ENCODE measurements at regions of chr1 and their contacts with region 1.

Region 1: GRCh38 chr1:229258031-229258756 is 12.7 kb upstream of the RAB4A start:
- DNase-seq: no peak
- ATAC-seq: peak; percentile 89
- H3K4me3 ChIP-seq: no peak overlapping the region
- H3K27ac ChIP-seq: no peak overlapping the region
- H3K4me1 ChIP-seq: 0 out of 2 replicates have a peak, but pooled peaks cover 6% of the 10 kb centered on the region
- H3K27me3 ChIP-seq: no peaks in the 10 kb centered on the region
- CTCF ChIP-seq: peak; percentile 81

Region 2: GRCh38 chr1:228702433-228702832 is 555.8 kb before region 1 on chr1:
- CTCF ChIA-PET with region 1: no interaction called
- POLR2A ChIA-PET with region 1: no interaction called
- in situ Hi-C with region 1: no loop called
- intact Hi-C with region 1: no loop called
- DNase-seq: no peak
- ATAC-seq: no peak
- H3K4me3 ChIP-seq: no peak overlapping the region
- H3K27ac ChIP-seq: no peak overlapping the region
- H3K4me1 ChIP-seq: no peaks in the 10 kb centered on the region
- H3K27me3 ChIP-seq: no peaks in the 10 kb centered on the region
- CTCF ChIP-seq: no peak

Region 3: GRCh38 chr1:228734881-228735801 is 523.1 kb before region 1 on chr1 and contains the start of gene RHOU:
- CTCF ChIA-PET with region 1: no interaction called
- POLR2A ChIA-PET with region 1: interaction called, 11 read pairs
- in situ Hi-C with region 1: no loop called
- intact Hi-C with region 1: no loop called
- DNase-seq: no peak
- ATAC-seq: peak; percentile 95
- H3K4me3 ChIP-seq: peak within 1 kb of the TSS; percentile 62 to 63
- H3K27ac ChIP-seq: peak within 1 kb of the TSS; percentile 70
- H3K4me1 ChIP-seq: peaks cover 7% of the 10 kb centered on the region
- H3K27me3 ChIP-seq: no peaks in the 10 kb centered on the region
- CTCF ChIP-seq: peak; percentile 96
- total RNA-seq, gene RHOU: 9.2 TPM

Region 4: GRCh38 chr1:229440851-229441537 is 182.8 kb after region 1 on chr1:
- CTCF ChIA-PET with region 1: interaction called, 10 read pairs
- POLR2A ChIA-PET with region 1: no interaction called
- in situ Hi-C with region 1: no loop called
- intact Hi-C with region 1: no loop called
- DNase-seq: no peak
- ATAC-seq: no peak
- H3K4me3 ChIP-seq: no peak overlapping the region
- H3K27ac ChIP-seq: no peak overlapping the region
- H3K4me1 ChIP-seq: no peaks in the 10 kb centered on the region
- H3K27me3 ChIP-seq: no peaks in the 10 kb centered on the region
- CTCF ChIP-seq: no peak

Region 5: GRCh38 chr1:229452956-229453801 is 195.0 kb after region 1 on chr1:
- CTCF ChIA-PET with region 1: interaction called, 4 read pairs
- POLR2A ChIA-PET with region 1: no interaction called
- in situ Hi-C with region 1: no loop called
- intact Hi-C with region 1: loop called (anchors 10 kb)
- DNase-seq: peak; percentile 2
- ATAC-seq: peak; percentile 77
- H3K4me3 ChIP-seq: no peak overlapping the region
- H3K27ac ChIP-seq: no peak overlapping the region
- H3K4me1 ChIP-seq: no peaks in the 10 kb centered on the region
- H3K27me3 ChIP-seq: no peaks in the 10 kb centered on the region
- CTCF ChIP-seq: peak; percentile 76

Region 6: DNA sequence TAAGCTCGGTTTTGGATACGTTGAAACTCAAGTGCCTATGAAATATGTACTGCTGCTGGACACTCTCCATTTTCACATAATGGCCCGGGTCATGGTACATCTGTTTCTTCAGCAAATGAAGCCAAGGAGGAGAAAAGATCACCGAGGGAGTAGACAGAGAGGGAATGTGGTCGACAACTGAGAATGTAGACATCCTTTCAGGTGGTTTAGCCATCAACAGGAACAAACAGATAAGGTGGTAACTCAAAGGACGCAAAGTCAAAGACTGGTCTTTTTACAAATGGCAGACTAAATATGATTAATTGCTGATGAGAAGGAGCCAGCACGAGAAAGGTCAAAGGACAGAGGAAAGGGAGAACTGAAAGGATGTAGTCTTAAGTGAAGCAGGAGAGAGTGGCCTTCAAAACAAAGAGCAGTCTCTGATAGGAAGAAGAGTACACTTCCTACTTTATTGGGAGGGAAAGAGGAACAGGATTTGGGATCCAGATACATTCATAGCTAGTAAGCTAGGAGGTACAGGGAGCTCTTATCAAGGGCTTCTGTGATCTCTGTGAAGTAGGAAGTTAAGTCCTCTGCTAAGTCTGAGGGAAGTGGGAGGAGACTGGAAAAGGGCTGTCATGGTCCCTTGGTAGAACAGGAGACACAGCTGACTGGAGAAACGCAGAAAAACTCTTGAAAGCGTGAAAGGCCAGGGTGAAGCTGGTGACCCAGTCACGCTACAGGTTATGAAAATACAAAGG is 221.6 kb after region 1 on chr1:
- CTCF ChIA-PET with region 1: interaction called, 8 read pairs
- POLR2A ChIA-PET with region 1: no interaction called
- in situ Hi-C with region 1: no loop called
- intact Hi-C with region 1: loop called (anchors 1 kb)
- DNase-seq: no peak
- ATAC-seq: peak; percentile 30; the same call in 1 of the 2 replicates
- H3K4me3 ChIP-seq: no peak overlapping the region
- H3K27ac ChIP-seq: no peak overlapping the region
- H3K4me1 ChIP-seq: no peaks in the 10 kb centered on the region
- H3K27me3 ChIP-seq: no peaks in the 10 kb centered on the region
- CTCF ChIP-seq: no peak

Region 7: GRCh38 chr1:229514578-229515275 is 256.5 kb after region 1 on chr1:
- CTCF ChIA-PET with region 1: no interaction called
- POLR2A ChIA-PET with region 1: no interaction called
- in situ Hi-C with region 1: no loop called
- intact Hi-C with region 1: loop called (anchors 1 kb)
- DNase-seq: peak; percentile 39
- ATAC-seq: peak; percentile 96
- H3K4me3 ChIP-seq: no peak overlapping the region
- H3K27ac ChIP-seq: no peak overlapping the region
- H3K4me1 ChIP-seq: no peaks in the 10 kb centered on the region; the same call in 1 of the 2 replicates
- H3K27me3 ChIP-seq: no peaks in the 10 kb centered on the region
- CTCF ChIP-seq: peak; percentile 91